Ovary (tissue), 10 donors: ENCODE measurements at regions of chr5 and their contacts with region 1.

Region 1: GRCh38 chr5:149551200-149552037 is at the start of gene CSNK1A1:
- DNase-seq: peak; percentile 99
- H3K4me3 ChIP-seq: peak within 1 kb of the TSS; percentile 87
- H3K27ac ChIP-seq: peak within 1 kb of the TSS; percentile 89 to 93
- H3K4me1 ChIP-seq: peaks cover 10% of the 10 kb centered on the region
- H3K27me3 ChIP-seq: no peaks in the 10 kb centered on the region
- CTCF ChIP-seq: peak; percentile 82 to 96 (median 96)
- EP300 ChIP-seq: peak; percentile 45
- POLR2A ChIP-seq: peak; percentile 94
- total RNA-seq, gene CSNK1A1: 96.2 to 233 (median 159) TPM

Region 2: DNA sequence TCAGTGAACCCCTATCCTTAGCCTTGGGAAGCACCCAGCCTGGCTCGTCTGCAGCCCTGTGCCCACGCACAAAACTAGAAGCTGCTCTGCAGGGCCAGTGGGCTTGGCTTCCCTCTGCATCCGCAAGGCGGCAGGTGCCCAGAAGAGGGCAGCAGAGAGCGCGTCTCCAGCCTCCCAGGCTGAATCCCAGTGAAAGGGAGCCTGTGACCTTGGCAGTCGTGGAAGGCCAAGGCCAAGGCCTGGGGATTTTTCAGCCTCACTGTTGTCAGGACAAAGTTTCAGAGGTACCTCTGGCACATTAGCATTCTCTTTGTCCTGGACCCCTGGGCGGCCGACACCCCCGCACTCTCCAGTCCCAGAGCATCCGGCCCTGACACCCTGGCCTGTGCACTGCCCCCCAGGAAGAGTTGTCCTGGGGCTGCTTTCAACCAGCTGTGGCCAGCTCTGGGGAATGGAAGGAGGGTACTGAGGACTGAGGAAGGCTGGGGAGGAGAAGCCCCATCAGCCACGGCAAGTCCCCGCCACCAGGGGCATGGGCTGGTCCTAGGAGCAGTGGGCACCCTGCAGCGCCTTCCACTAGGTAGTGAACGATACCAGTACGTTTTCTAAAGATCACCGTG is 108.7 kb before region 1 on chr5:
- intact Hi-C with region 1: loop called in 3 of 4 experiments (anchors 2 to 5 kb)
- DNase-seq: peak; percentile 86 to 95 (median 92)
- H3K4me3 ChIP-seq: no peak overlapping the region
- H3K27ac ChIP-seq: peak overlapping the region; percentile 37 to 90
- H3K4me1 ChIP-seq: peaks cover 10% of the 10 kb centered on the region
- H3K27me3 ChIP-seq: no peaks in the 10 kb centered on the region
- CTCF ChIP-seq: peak; percentile 92 to 97 (median 94)
- EP300 ChIP-seq: no peak
- POLR2A ChIP-seq: peak; percentile 13

Region 3: GRCh38 chr5:149448831-149449714 is 102.3 kb before region 1 on chr5:
- intact Hi-C with region 1: loop called in 3 of 4 experiments (anchors 5 kb)
- DNase-seq: no peak
- H3K4me3 ChIP-seq: no peak overlapping the region
- H3K27ac ChIP-seq: peak overlapping the region in 1 of 2 donors; percentile 76
- H3K4me1 ChIP-seq: peaks cover 31% of the 10 kb centered on the region
- H3K27me3 ChIP-seq: no peaks in the 10 kb centered on the region
- CTCF ChIP-seq: no peak
- EP300 ChIP-seq: no peak
- POLR2A ChIP-seq: no peak